Right cardiac atrium (tissue), 5 donors: ENCODE measurements at regions of chr1 and their contacts with region 1.

Region 1: DNA sequence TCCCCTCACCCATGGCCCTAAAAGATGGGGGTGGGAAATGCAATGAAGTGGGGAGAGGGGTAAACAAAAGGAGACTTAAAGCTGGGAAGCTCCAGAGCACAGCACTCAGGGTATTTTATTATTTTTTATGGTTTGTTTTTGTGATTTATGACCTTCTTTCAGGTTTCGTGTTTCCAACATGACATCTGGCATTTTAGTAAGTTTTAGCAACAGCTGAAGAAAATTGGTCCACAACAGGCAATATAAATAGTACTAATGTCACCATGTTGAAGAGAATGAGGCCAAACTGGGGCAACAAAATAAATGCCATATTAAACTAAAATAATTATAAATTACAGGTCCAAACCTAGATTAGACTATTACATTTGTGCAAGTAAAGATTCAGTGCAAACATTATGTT is 56.3 kb downstream of the TBX15 start:
- DNase-seq: no peak
- ATAC-seq: no peak
- H3K4me3 ChIP-seq: no peak overlapping the region
- H3K27ac ChIP-seq: no peak overlapping the region
- H3K4me1 ChIP-seq: no peaks in the 10 kb centered on the region
- H3K27me3 ChIP-seq: no peaks in the 10 kb centered on the region

Region 2: GRCh38 chr1:118325550-118326225 is 606.2 kb before region 1 on chr1:
- intact Hi-C with region 1: no loop called
- DNase-seq: no peak
- ATAC-seq: no peak
- H3K4me3 ChIP-seq: no peak overlapping the region
- H3K27ac ChIP-seq: no peak overlapping the region
- H3K4me1 ChIP-seq: no peaks in the 10 kb centered on the region
- H3K27me3 ChIP-seq: no peaks in the 10 kb centered on the region

Region 3: GRCh38 chr1:118826669-118827068 is 105.2 kb before region 1 on chr1:
- intact Hi-C with region 1: loop called in 1 of 4 experiments (anchors 10 kb)
- DNase-seq: no peak
- ATAC-seq: no peak
- H3K4me3 ChIP-seq: no peak overlapping the region
- H3K27ac ChIP-seq: no peak overlapping the region
- H3K4me1 ChIP-seq: no peaks in the 10 kb centered on the region
- H3K27me3 ChIP-seq: no peaks in the 10 kb centered on the region

Region 4: DNA sequence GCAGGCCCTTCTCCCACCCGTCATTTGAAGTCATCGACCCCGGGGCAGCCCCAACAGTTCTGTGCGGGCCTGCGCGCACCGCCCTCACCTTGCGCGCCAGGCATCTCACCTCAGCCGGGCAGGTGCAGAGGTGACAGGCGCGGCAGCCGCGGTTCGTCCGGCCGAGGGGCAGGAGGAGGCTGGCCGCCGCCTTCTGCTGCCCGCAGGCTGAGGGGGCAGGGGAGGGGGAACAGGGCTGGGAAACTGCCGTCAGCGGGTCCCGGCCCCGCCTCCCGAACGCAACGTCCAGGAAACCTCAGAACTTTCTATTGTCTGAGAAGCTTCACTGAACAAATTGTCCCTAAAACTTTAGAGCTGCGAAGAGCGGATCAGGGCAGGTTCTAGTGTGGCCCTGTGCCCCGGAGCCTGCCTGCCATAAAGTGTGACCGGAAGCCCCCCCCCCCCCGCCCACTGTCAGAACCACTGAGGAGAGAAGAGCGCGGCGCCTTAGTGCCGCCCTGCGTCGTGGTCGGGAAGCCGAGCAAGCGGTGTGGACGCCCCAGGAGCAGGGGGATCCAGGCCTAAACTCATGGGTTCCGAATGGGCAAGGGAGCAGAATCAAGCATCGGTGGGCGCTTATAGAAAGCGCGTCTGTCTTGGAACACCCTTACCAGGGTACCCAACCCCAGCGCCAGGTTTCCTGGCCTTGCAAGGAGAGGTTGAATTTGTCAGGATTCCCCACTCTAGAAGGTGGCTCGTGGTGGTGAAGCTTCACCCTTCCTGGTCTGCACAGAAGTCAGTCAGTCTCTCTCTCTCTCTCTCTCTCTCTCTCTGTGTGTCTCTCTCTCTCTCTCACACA is 69.5 kb after region 1 on chr1:
- intact Hi-C with region 1: no loop called
- DNase-seq: peak; percentile 57 to 71 (median 68)
- ATAC-seq: peak; percentile 67 to 70
- H3K4me3 ChIP-seq: peak overlapping the region; percentile 7
- H3K27ac ChIP-seq: no peak overlapping the region
- H3K4me1 ChIP-seq: no peaks in the 10 kb centered on the region
- H3K27me3 ChIP-seq: no peaks in the 10 kb centered on the region

Region 5: DNA sequence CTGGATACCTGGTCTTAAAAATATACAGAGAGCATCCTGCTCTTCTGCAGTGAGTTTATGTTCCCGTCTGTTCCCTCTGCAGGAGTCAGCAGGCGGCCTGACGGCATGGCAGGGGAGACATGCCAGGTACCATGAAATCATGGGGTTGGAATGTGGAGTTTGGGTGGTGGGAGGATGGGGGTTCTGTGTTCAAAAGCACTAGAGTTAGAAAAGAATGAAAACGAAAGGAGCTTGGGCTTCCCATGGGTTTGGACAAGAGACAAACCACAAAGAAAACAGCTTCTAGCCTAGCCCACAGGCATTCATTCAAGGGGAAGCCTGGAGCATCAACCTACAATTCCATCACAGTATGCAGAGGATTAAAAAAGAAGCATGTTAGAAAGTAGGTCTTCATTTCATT is 148.7 kb after region 1 on chr1:
- intact Hi-C with region 1: no loop called
- DNase-seq: peak in 1 of 3 donors; percentile 54
- ATAC-seq: peak in 1 of 2 donors; percentile 41
- H3K4me3 ChIP-seq: no peak overlapping the region
- H3K27ac ChIP-seq: no peak overlapping the region
- H3K4me1 ChIP-seq: no peaks in the 10 kb centered on the region
- H3K27me3 ChIP-seq: no peaks in the 10 kb centered on the region